CD14-positive monocyte (primary cell): ENCODE measurements at regions of chr7 and their contacts with region 1.

Region 1: DNA sequence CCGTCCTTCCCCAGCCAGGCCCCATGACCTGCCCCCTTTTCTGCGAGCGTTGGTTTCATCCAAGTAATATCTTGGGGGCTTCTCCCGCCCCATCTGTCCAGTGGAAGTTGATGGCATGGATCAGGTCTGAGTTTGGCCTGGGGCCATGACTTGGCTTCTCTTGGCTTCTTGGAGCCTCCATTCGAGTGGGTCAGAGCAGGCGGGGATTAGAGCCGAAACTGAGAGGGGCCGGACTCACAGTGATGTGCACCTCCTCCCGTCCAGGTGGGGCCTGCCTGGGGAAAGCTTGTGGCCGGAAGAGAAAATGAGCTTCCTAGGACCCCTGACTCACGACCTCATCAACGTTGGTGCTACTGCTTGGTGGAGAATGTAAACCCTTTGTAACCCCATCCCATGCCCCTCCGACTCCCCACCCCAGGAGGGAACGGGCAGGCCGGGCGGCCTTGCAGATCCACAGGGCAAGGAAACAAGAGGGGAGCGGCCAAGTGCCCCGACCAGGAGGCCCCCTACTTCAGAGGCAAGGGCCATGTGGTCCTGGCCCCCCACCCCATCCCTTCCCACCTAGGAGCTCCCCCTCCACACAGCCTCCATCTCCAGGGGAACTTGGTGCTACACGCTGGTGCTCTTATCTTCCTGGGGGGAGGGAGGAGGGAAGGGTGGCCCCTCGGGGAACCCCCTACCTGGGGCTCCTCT is 15.1 kb upstream of the LIMK1 start:
- DNase-seq: no peak
- H3K4me3 ChIP-seq: no peak overlapping the region
- H3K4me3 Mint-ChIP-seq: no peak overlapping the region
- H3K27ac ChIP-seq: no peak overlapping the region
- H3K27ac Mint-ChIP-seq: peak overlapping the region in 1 of 7 donors; percentile 62
- H3K4me1 ChIP-seq: no peaks in the 10 kb centered on the region
- H3K4me1 Mint-ChIP-seq: no peaks in the 10 kb centered on the region
- H3K27me3 ChIP-seq: no peaks in the 10 kb centered on the region
- H3K27me3 Mint-ChIP-seq: peaks cover 2 to 5% (median 4%) of the 10 kb centered on the region in 3 donors
- CTCF ChIP-seq: no peak

Region 2: GRCh38 chr7:73865738-73866445 is 202.6 kb before region 1 on chr7:
- intact Hi-C with region 1: no loop called
- DNase-seq: peak in 2 of 3 donors; percentile 29 to 31
- H3K4me3 ChIP-seq: no peak overlapping the region
- H3K4me3 Mint-ChIP-seq: no peak overlapping the region
- H3K27ac ChIP-seq: no peak overlapping the region
- H3K27ac Mint-ChIP-seq: no peak overlapping the region
- H3K4me1 ChIP-seq: no peaks in the 10 kb centered on the region
- H3K4me1 Mint-ChIP-seq: no peaks in the 10 kb centered on the region
- H3K27me3 ChIP-seq: no peaks in the 10 kb centered on the region
- H3K27me3 Mint-ChIP-seq: peaks cover 2 to 8% (median 6%) of the 10 kb centered on the region in 3 donors
- CTCF ChIP-seq: peak; percentile 69

Region 3: GRCh38 chr7:74115326-74115725 is 46.8 kb after region 1 on chr7:
- intact Hi-C with region 1: no loop called
- DNase-seq: no peak
- H3K4me3 ChIP-seq: no peak overlapping the region
- H3K4me3 Mint-ChIP-seq: no peak overlapping the region
- H3K27ac ChIP-seq: no peak overlapping the region
- H3K27ac Mint-ChIP-seq: no peak overlapping the region
- H3K4me1 ChIP-seq: no peaks in the 10 kb centered on the region
- H3K4me1 Mint-ChIP-seq: no peaks in the 10 kb centered on the region
- H3K27me3 ChIP-seq: no peaks in the 10 kb centered on the region
- H3K27me3 Mint-ChIP-seq: peaks cover 0 to 8% (median 1%) of the 10 kb centered on the region in 3 donors
- CTCF ChIP-seq: no peak

Region 4: GRCh38 chr7:74183613-74184450 is 115.3 kb after region 1 on chr7:
- intact Hi-C with region 1: loop called in 1 of 2 experiments (anchors 5 kb)
- DNase-seq: peak in 1 of 3 donors; percentile 43
- H3K4me3 ChIP-seq: no peak overlapping the region
- H3K4me3 Mint-ChIP-seq: no peak overlapping the region
- H3K27ac ChIP-seq: peak overlapping the region in 1 of 2 donors; percentile 25
- H3K27ac Mint-ChIP-seq: peak overlapping the region in 4 of 7 donors; percentile 18 to 74 (median 46)
- H3K4me1 ChIP-seq: peaks cover 5 to 10% of the 10 kb centered on the region in 2 donors
- H3K4me1 Mint-ChIP-seq: peaks cover 49% of the 10 kb centered on the region
- H3K27me3 ChIP-seq: no peaks in the 10 kb centered on the region
- H3K27me3 Mint-ChIP-seq: no peaks in the 10 kb centered on the region
- CTCF ChIP-seq: no peak

Region 5: DNA sequence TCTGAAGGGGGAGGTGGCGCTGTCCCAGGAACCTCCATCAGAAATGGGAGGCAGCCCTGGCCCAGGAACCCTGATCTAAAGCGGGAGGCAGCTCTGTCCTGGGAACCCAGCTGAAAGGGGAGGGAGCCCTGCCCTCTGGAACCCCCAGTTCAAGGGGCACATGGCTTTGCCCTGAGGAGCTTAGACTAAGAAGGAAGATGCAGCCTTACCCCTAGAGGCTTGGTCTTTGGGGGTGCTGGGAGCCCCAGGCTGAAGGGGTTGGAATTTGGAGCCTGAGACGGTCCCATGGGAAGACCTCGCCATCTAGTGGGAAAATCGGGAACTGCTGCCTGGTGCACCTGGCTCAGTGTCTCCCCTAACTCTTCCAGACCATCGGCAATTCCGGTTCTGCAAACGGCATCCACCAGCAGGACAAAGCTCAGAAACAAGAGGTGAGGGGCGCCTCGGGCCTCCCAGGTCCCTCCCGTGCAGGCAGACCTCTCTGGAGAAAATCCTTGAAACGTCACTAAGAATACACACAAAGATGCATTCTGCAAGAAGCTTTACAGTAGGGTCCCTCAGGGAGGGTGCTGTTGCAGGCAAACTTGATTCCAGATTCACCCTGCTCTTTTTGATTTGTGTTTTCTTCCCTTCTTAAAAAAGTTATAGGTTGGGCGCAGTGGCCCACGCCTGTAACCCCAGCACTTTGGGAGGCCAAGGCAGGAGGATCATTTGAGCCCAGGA is 332.8 kb after region 1 on chr7:
- intact Hi-C with region 1: loop called (anchors 2 to 5 kb)
- DNase-seq: peak; percentile 49 to 61 (median 58)
- H3K4me3 ChIP-seq: no peak overlapping the region
- H3K4me3 Mint-ChIP-seq: no peak overlapping the region
- H3K27ac ChIP-seq: no peak overlapping the region
- H3K27ac Mint-ChIP-seq: peak overlapping the region in 1 of 7 donors; percentile 25
- H3K4me1 ChIP-seq: no peaks in the 10 kb centered on the region
- H3K4me1 Mint-ChIP-seq: peaks cover 6% of the 10 kb centered on the region
- H3K27me3 ChIP-seq: no peaks in the 10 kb centered on the region
- H3K27me3 Mint-ChIP-seq: no peaks in the 10 kb centered on the region
- CTCF ChIP-seq: peak; percentile 95